Activated CD4-positive, alpha-beta T cell treated with anti-CD3 and anti-CD28 coated beads, Interleukin-2, amount 10 ng/mL, durations not matched to agents 24 days and 14 days (primary cell): ENCODE measurements at regions of chr6 and their contacts with region 1.

Region 1: GRCh38 chr6:2111162-2111677 is 134.2 kb downstream of the GMDS start:
- DNase-seq: no peak
- H3K4me3 Mint-ChIP-seq: peak overlapping the region; percentile 79
- H3K27ac Mint-ChIP-seq: peak overlapping the region; percentile 91
- H3K4me1 Mint-ChIP-seq: peaks cover 28% of the 10 kb centered on the region
- H3K27me3 Mint-ChIP-seq: peaks cover 3% of the 10 kb centered on the region

Region 2: GRCh38 chr6:1770968-1771723 is 340.1 kb before region 1 on chr6:
- intact Hi-C with region 1: loop called (anchors 2 kb)
- DNase-seq: peak; percentile 61
- H3K4me3 Mint-ChIP-seq: no peak overlapping the region
- H3K27ac Mint-ChIP-seq: peak overlapping the region; percentile 52
- H3K4me1 Mint-ChIP-seq: peaks cover 29% of the 10 kb centered on the region
- H3K27me3 Mint-ChIP-seq: no peaks in the 10 kb centered on the region

Region 3: GRCh38 chr6:2127484-2127911 is 16.3 kb after region 1 on chr6:
- intact Hi-C with region 1: loop called (anchors 1 kb)
- DNase-seq: peak; percentile 68
- H3K4me3 Mint-ChIP-seq: peak overlapping the region; percentile 58
- H3K27ac Mint-ChIP-seq: peak overlapping the region; percentile 78
- H3K4me1 Mint-ChIP-seq: peaks cover 32% of the 10 kb centered on the region
- H3K27me3 Mint-ChIP-seq: peaks cover 2% of the 10 kb centered on the region

Region 4: DNA sequence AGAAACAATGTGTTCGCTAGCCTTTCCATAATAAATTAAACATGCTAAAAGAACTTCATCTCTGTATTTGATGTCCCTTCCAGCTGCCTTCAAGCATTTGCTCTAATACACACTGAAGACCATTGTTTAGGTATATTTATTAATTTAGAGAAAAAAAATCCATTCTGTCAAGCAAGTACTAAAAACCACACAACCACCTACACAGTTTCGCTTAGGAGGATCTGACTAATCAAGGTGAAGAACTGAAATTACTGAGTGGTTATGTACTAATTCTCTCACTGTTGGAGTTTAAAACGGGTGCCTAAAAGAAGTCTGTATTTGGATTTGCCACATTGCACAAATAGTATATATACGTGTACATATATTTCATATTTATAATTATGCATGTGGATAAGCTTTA is 75.3 kb after region 1 on chr6:
- intact Hi-C with region 1: loop called (anchors 1 kb)
- DNase-seq: no peak
- H3K4me3 Mint-ChIP-seq: no peak overlapping the region
- H3K27ac Mint-ChIP-seq: no peak overlapping the region
- H3K4me1 Mint-ChIP-seq: peaks cover 14% of the 10 kb centered on the region
- H3K27me3 Mint-ChIP-seq: peaks cover 20% of the 10 kb centered on the region

Region 5: GRCh38 chr6:2353412-2354137 is 242.4 kb after region 1 on chr6:
- intact Hi-C with region 1: loop called (anchors 2 kb)
- DNase-seq: peak; percentile 84
- H3K4me3 Mint-ChIP-seq: no peak overlapping the region
- H3K27ac Mint-ChIP-seq: no peak overlapping the region
- H3K4me1 Mint-ChIP-seq: no peaks in the 10 kb centered on the region
- H3K27me3 Mint-ChIP-seq: peaks cover 9% of the 10 kb centered on the region

Region 6: GRCh38 chr6:2542858-2543218 is 431.6 kb after region 1 on chr6:
- intact Hi-C with region 1: loop called (anchors 5 kb)
- DNase-seq: peak; percentile 93
- H3K4me3 Mint-ChIP-seq: peak overlapping the region; percentile 64
- H3K27ac Mint-ChIP-seq: peak overlapping the region; percentile 25
- H3K4me1 Mint-ChIP-seq: peaks cover 28% of the 10 kb centered on the region
- H3K27me3 Mint-ChIP-seq: peaks cover 69% of the 10 kb centered on the region

Region 7: DNA sequence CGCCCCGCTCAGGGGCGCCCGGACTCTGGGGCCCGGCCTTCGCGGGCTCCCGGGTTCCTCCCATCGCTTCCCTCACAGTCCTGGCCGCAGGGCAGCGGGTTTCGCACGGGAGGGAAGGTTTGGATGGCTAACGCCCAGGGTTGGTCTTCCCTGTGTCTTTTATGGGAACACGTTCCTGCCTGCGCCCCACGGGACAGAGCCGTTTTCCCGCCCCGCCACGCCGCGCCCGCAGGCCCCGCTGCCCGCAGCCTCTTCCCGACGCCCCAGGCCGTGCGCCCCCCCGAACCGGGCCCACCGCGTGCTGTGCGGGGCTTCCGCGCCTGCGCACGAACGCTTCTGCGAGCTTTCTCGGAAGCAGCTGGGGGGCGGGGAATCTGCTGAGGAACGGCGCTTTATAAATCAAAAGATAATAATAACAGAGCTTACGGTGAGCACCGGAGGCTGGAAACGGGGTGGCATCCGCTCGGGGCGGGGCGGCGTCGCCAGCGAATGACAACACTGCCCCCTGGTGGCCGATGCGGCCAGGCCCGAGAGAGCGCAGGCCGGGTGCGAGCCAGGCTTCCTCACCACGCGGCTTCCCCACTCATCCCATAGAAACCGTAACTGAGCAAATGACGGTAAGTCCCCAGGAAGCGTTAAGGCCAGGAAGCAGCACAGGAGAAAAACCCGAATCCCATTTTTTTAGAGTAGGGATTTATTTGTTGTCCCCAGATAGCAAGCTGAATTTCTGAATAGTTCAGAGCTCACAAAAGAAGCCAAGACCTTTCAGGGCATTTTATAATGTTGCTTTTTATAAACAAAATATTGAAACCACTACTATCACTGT is 523.1 kb after region 1 on chr6:
- intact Hi-C with region 1: loop called (anchors 10 kb)
- DNase-seq: peak; percentile 95
- H3K4me3 Mint-ChIP-seq: peak overlapping the region; percentile 76
- H3K27ac Mint-ChIP-seq: no peak overlapping the region
- H3K4me1 Mint-ChIP-seq: peaks cover 5% of the 10 kb centered on the region
- H3K27me3 Mint-ChIP-seq: peaks cover 39% of the 10 kb centered on the region